Activated CD8-positive, alpha-beta T cell treated with anti-CD3 and anti-CD28 coated beads for 36 hours (primary cell): ENCODE measurements at regions of chr16 and their contacts with region 1.

Region 1: DNA sequence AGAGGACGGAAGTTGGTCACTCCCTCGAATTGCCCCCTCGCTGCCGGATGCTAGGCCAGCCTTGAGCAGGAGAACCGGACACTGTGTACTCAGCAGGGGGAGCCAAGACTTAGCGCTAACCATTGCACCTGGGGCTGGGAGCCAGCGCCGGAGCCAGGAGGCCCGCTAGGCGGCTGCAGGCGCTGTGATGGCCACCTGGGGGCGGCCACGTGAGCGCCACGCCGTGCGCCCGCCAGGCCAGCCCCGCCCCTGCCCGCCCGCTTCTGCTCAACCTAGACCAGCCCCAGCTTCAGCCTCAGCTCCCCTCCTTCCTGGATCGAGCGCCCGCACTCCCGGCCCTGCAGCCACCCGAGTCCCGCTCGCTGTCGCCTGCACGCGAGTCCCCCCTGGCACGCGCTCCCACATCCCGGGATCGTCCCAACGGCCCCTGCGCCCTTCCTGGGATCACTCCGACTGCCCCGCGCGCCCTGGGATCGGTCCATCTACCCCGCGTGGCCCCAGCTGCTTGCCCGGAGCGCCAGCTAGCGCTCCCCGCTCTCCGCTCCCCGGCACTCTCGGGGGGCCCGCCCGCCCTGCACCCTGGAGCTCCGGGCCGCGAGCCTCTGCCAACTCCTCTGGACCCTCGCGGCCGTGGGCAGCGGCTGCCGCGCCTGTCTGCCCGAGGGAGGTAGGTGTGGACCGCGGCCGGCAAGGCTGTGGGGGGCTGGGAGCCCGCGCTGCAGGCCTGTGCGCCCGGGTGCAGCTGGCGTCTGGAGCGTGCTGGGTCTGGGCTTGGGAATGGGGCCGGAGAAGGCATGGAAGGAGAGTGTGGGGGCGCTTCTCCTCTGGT is at the start of gene EEF2K:
- DNase-seq: peak; percentile 93
- ATAC-seq: peak; percentile 80
- H3K4me3 Mint-ChIP-seq: peak within 1 kb of the TSS; percentile 97
- H3K27ac Mint-ChIP-seq: peak within 1 kb of the TSS; percentile 96
- H3K4me1 Mint-ChIP-seq: peaks cover 40% of the 10 kb centered on the region
- H3K27me3 Mint-ChIP-seq: no peaks in the 10 kb centered on the region
- CTCF ChIP-seq: peak; percentile 59
- total RNA-seq, gene EEF2K: 28.6 to 31.2 TPM

Region 2: GRCh38 chr16:22217889-22218730 is 11.9 kb after region 1 on chr16:
- CTCF ChIA-PET with region 1: interaction called, 8 read pairs
- POLR2A ChIA-PET with region 1: interaction called, 12 read pairs
- intact Hi-C with region 1: no loop called
- DNase-seq: peak; percentile 54
- ATAC-seq: peak; percentile 74
- H3K4me3 Mint-ChIP-seq: no peak overlapping the region
- H3K27ac Mint-ChIP-seq: no peak overlapping the region
- H3K4me1 Mint-ChIP-seq: peaks cover 33% of the 10 kb centered on the region
- H3K27me3 Mint-ChIP-seq: no peaks in the 10 kb centered on the region
- CTCF ChIP-seq: no peak

Region 3: GRCh38 chr16:22262460-22262859 is 56.2 kb after region 1 on chr16:
- CTCF ChIA-PET with region 1: no interaction called
- POLR2A ChIA-PET with region 1: interaction called, 13 read pairs
- intact Hi-C with region 1: no loop called
- DNase-seq: peak; percentile 26
- ATAC-seq: peak; percentile 87
- H3K4me3 Mint-ChIP-seq: no peak overlapping the region
- H3K27ac Mint-ChIP-seq: peak overlapping the region; percentile 71
- H3K4me1 Mint-ChIP-seq: peaks cover 18% of the 10 kb centered on the region
- H3K27me3 Mint-ChIP-seq: no peaks in the 10 kb centered on the region
- CTCF ChIP-seq: no peak